RWPE1 (cell line): ENCODE measurements at regions of chr1 and their contacts with region 1.

Region 1: GRCh38 chr1:199747984-199748383 is 279.5 kb upstream of the NR5A2 start:
- DNase-seq: no peak
- H3K27ac ChIP-seq: no peak overlapping the region
- CTCF ChIP-seq: no peak

Region 2: DNA sequence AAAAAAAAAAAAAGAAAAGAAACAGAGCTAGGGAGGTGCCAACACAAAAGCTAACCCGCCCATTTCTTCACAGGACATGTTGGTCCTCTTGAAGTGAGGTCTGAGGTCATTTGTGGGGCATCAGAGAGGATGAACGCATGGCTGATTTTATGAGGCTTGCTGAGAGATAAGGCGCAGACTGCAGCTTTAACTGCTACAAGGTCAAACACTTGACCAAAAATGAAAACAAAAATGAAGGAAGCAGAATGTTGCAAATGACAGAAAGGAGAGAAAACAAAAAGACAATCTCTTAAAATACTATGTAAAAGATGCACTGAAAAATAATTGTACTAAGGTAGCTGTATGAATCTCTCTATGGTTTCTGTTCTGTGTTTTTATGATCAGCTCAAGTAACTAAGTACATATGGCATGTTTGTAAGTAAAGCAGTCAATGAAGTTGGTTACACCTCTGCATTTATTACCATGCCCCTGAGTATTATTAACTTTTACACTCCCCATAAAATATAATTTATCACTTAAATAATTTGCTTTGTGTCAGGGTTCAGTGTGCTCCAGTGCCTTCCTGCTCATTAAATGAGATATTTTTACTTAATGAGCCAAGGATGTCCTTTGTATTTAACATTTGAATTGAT is 30.5 kb after region 1 on chr1:
- CTCF ChIA-PET with region 1: interaction called, 13 read pairs
- POLR2A ChIA-PET with region 1: no interaction called
- DNase-seq: no peak
- H3K27ac ChIP-seq: no peak overlapping the region
- CTCF ChIP-seq: no peak